ENCODE measurements at regions of chr21 and their contacts with region 1.

Region 1: GRCh38 chr21:25607151-25608043 is at the start of gene MRPL39:
- DNase-seq: peak; percentile 96
- H3K4me3 Mint-ChIP-seq: peak within 1 kb of the TSS; percentile 92
- H3K27ac Mint-ChIP-seq: peak within 1 kb of the TSS; percentile 97
- H3K4me1 Mint-ChIP-seq: peaks cover 25% of the 10 kb centered on the region
- H3K27me3 Mint-ChIP-seq: no peaks in the 10 kb centered on the region
- total RNA-seq, gene MRPL39: 63.2 and 66.0 TPM in 2 replicates

Region 2: GRCh38 chr21:24881511-24881910 is 725.9 kb before region 1 on chr21:
- intact Hi-C with region 1: no loop called
- DNase-seq: no peak
- H3K4me3 Mint-ChIP-seq: no peak overlapping the region
- H3K27ac Mint-ChIP-seq: no peak overlapping the region
- H3K4me1 Mint-ChIP-seq: no peaks in the 10 kb centered on the region
- H3K27me3 Mint-ChIP-seq: no peaks in the 10 kb centered on the region

Region 3: GRCh38 chr21:25421327-25422028 is 185.9 kb before region 1 on chr21:
- intact Hi-C with region 1: loop called (anchors 1 kb)
- DNase-seq: peak; percentile 89
- H3K4me3 Mint-ChIP-seq: peak overlapping the region; percentile 70
- H3K27ac Mint-ChIP-seq: peak overlapping the region; percentile 93
- H3K4me1 Mint-ChIP-seq: peaks cover 39% of the 10 kb centered on the region
- H3K27me3 Mint-ChIP-seq: no peaks in the 10 kb centered on the region

Region 4: GRCh38 chr21:25639551-25640201 is 32.3 kb after region 1 on chr21:
- intact Hi-C with region 1: loop called (anchors 1 kb)
- DNase-seq: peak; percentile 78
- H3K4me3 Mint-ChIP-seq: peak overlapping the region; percentile 79
- H3K27ac Mint-ChIP-seq: no peak overlapping the region
- H3K4me1 Mint-ChIP-seq: peaks cover 25% of the 10 kb centered on the region
- H3K27me3 Mint-ChIP-seq: peaks cover 22% of the 10 kb centered on the region

Region 5: DNA sequence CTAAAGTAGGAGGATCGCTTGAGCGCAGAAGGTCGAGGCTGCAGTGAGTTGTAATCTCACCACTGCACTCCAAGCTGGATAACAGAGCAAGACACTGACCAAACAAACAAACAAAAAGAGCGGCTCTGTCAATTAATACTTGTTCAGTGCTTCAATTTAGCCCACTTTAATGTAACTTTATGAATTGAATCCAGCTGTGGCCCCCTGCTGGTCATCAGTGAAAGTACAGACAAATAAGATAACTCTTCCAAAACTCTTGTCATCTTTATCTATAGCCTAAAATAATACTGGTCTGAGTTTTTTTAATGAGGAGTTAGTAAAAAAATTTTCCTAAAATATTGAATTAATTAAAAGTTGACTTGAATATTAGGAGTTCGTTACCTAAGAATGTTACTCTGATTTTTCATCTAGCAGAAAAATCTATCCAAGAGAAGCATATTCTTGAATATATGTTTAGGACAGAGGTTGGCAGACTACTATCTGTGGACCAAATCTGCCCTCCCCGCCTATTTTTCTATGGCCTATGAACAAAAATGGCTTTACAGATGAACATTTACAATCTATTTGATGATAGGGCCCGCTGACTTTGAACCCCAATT is 101.2 kb after region 1 on chr21:
- intact Hi-C with region 1: loop called (anchors 1 kb)
- DNase-seq: peak; percentile 80
- H3K4me3 Mint-ChIP-seq: no peak overlapping the region
- H3K27ac Mint-ChIP-seq: no peak overlapping the region
- H3K4me1 Mint-ChIP-seq: no peaks in the 10 kb centered on the region
- H3K27me3 Mint-ChIP-seq: no peaks in the 10 kb centered on the region

Region 6: DNA sequence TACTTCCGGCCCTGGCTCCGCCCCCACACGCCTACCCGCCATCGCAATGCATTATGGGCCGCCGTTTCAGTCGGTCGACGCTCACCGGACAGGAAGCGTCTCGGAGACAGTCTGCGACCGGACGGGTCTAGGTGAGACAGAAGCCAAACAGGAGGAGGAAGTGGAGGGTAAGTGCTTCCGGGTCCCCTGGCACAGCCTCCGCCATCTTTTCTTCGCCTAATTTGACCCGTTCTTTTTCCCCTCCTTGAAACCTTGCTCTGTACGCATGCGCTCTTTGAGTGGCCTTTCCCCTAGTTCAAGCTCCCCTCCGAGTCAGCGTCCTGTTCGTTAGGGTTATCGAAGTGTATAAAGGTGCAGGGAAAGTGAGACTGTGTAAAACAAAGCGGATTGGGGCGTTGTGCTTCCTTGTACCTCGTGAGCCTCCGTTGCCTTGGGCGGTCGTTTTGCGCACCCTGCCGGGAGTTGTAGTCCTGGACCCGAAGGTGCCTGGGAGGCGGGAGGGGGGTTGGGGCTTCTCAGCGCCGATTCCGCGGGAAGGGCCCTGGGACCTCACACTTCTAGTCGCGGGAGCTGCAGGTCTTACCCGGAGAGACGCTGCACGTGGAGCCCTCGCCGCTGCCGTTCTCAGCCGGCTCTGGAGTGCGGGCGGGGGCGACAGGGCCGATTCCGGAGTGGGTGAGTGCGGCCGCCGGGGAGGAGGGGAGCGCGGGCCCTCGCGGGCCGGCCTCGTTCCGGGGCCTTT is 127.7 kb after region 1 on chr21 and contains the starts of genes ATP5PF and GABPA:
- intact Hi-C with region 1: loop called (anchors 1 kb)
- DNase-seq: peak; percentile 99
- H3K4me3 Mint-ChIP-seq: peak within 1 kb of the TSS; percentile 100
- H3K27ac Mint-ChIP-seq: peak within 1 kb of the TSS; percentile 100
- H3K4me1 Mint-ChIP-seq: peaks cover 35% of the 10 kb centered on the region
- H3K27me3 Mint-ChIP-seq: peaks cover 4% of the 10 kb centered on the region
- total RNA-seq, gene ATP5PF: 174 TPM in 2 replicates
- total RNA-seq, gene GABPA: 25.6 and 27.6 TPM in 2 replicates

Region 7: GRCh38 chr21:25801217-25802014 is 194.0 kb after region 1 on chr21:
- intact Hi-C with region 1: loop called (anchors 1 kb)
- DNase-seq: peak; percentile 97
- H3K4me3 Mint-ChIP-seq: peak overlapping the region; percentile 55
- H3K27ac Mint-ChIP-seq: no peak overlapping the region
- H3K4me1 Mint-ChIP-seq: peaks cover 6% of the 10 kb centered on the region
- H3K27me3 Mint-ChIP-seq: peaks cover 31% of the 10 kb centered on the region

Region 8: GRCh38 chr21:25862596-25862995 is 255.2 kb after region 1 on chr21:
- intact Hi-C with region 1: loop called (anchors 1 kb)
- DNase-seq: peak; percentile 69
- H3K4me3 Mint-ChIP-seq: no peak overlapping the region
- H3K27ac Mint-ChIP-seq: no peak overlapping the region
- H3K4me1 Mint-ChIP-seq: peaks cover 2% of the 10 kb centered on the region
- H3K27me3 Mint-ChIP-seq: peaks cover 18% of the 10 kb centered on the region